Heart left ventricle (tissue), 16 donors: ENCODE measurements at regions of chr5 and their contacts with region 1.

Region 1: DNA sequence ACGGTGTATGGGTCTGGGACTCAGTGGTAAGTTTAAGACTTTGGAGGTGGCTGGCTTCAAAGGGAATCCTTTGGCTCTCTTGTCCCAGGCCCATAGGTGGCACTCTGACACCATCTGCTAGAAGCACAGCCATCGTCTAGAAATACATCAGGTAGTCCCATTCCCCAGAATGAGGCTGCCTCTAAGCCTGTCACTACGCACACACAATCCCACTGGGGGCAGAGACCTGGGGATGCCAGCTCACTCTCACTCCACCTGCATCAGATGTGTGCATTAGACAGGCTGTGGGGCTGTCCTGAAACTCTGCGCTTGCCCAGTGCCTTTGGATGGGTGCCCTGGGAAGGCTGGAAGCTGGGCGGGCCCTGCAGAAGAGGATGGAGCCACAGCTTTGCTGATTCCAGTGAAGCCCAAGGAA is 127.5 kb upstream of the PANK3 start:
- DNase-seq: peak in 2 of 5 donors; percentile 40 to 49
- ATAC-seq: peak; percentile 68 to 84 (median 76)
- H3K4me3 ChIP-seq: no peak overlapping the region
- H3K27ac ChIP-seq: no peak overlapping the region
- H3K4me1 ChIP-seq: no peaks in the 10 kb centered on the region
- H3K27me3 ChIP-seq: no peaks in the 10 kb centered on the region
- CTCF ChIP-seq: peak in 11 of 12 donors; percentile 41 to 69 (median 58)
- POLR2A ChIP-seq: no peak

Region 2: DNA sequence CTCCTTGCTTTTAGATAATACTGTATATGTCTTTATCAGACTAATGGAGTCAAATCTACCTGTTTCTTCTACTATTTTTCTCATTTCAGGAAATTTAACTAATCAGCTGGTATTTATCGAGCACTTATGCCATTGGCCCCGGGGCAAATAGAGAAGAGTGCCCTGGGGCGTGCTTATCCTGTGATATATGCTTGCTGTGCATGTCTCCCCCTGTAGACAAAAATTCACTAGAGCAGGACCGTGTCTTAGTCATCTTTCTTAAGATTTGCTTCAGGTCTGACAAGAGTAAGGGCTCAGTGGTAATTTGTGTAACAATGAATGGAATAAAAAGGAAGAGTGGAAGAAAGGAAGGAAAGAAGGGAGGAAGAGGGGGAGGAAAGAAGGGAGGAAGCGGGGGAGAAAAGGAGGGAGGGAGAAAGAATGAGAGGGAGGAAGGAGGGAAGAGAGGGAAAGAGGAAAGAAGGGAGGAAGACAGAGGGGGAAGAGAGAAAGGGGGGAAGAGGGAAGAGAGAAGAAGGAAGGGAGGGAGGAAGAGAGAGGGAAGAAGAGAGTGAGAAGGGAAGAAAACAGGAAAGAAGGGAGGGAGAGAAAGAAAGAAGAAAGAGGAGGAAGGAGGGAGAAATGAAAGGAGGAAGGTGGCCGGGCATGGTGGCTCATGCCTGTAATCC is 168.2 kb after region 1 on chr5:
- intact Hi-C with region 1: loop called in 3 of 10 experiments (anchors 5 to 10 kb)
- DNase-seq: no peak
- ATAC-seq: peak in 1 of 4 donors; percentile 24
- H3K4me3 ChIP-seq: no peak overlapping the region
- H3K27ac ChIP-seq: no peak overlapping the region
- H3K4me1 ChIP-seq: peaks cover 0 to 10% (median 1%) of the 10 kb centered on the region in 12 donors
- H3K27me3 ChIP-seq: no peaks in the 10 kb centered on the region
- CTCF ChIP-seq: peak in 6 of 12 donors; percentile 17 to 45 (median 34)
- POLR2A ChIP-seq: no peak

Region 3: DNA sequence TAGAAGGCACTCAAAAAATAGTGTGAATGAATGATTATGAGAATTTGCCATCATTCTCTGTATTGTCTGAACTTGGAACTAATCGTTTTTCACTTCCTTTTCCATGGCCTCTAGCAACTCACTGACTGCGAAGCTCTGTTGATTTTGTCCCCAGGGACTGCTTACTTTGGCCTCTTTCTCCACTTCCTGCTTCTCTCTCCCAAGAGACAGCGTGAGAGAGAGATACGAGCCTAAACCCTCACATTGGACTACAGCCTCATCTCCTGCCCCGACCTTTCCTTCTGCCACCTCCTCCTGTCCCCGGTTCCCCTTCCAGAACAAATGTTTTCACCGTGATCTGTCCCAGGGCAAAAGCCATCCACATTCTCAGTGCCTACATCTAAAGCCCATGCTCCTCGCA is 173.3 kb after region 1 on chr5:
- intact Hi-C with region 1: loop called in 2 of 10 experiments (anchors 5 to 10 kb)
- DNase-seq: peak in 2 of 5 donors; percentile 35 to 39
- ATAC-seq: peak in 3 of 4 donors; percentile 53 to 70 (median 59)
- H3K4me3 ChIP-seq: no peak overlapping the region
- H3K27ac ChIP-seq: peak overlapping the region in 4 of 12 donors; percentile 13 to 45 (median 32)
- H3K4me1 ChIP-seq: peaks cover 0 to 20% (median 3%) of the 10 kb centered on the region in 12 donors
- H3K27me3 ChIP-seq: no peaks in the 10 kb centered on the region
- CTCF ChIP-seq: no peak
- POLR2A ChIP-seq: no peak

Region 4: GRCh38 chr5:168947212-168947868 is 240.7 kb after region 1 on chr5:
- intact Hi-C with region 1: loop called in 5 of 10 experiments (anchors 5 to 10 kb)
- DNase-seq: peak in 3 of 5 donors; percentile 18 to 37 (median 35)
- ATAC-seq: peak in 3 of 4 donors; percentile 39 to 75 (median 67)
- H3K4me3 ChIP-seq: no peak overlapping the region
- H3K27ac ChIP-seq: no peak overlapping the region
- H3K4me1 ChIP-seq: peaks cover 0 to 8% (median 0%) of the 10 kb centered on the region in 12 donors
- H3K27me3 ChIP-seq: no peaks in the 10 kb centered on the region
- CTCF ChIP-seq: peak; percentile 52 to 75 (median 61)
- POLR2A ChIP-seq: no peak

Region 5: GRCh38 chr5:169197343-169197742 is 490.7 kb after region 1 on chr5:
- intact Hi-C with region 1: loop called in 1 of 10 experiments (anchors 5 kb)
- DNase-seq: peak in 3 of 5 donors; percentile 14 to 35 (median 27)
- ATAC-seq: peak; percentile 42 to 77 (median 74)
- H3K4me3 ChIP-seq: no peak overlapping the region
- H3K27ac ChIP-seq: no peak overlapping the region
- H3K4me1 ChIP-seq: no peaks in the 10 kb centered on the region
- H3K27me3 ChIP-seq: no peaks in the 10 kb centered on the region
- CTCF ChIP-seq: peak in 11 of 12 donors; percentile 25 to 55 (median 41)
- POLR2A ChIP-seq: no peak

Region 6: GRCh38 chr5:169548315-169548714 is 841.7 kb after region 1 on chr5:
- intact Hi-C with region 1: loop called in 2 of 10 experiments (anchors 5 to 10 kb)
- DNase-seq: no peak
- ATAC-seq: peak in 3 of 4 donors; percentile 74 to 87 (median 79)
- H3K4me3 ChIP-seq: no peak overlapping the region
- H3K27ac ChIP-seq: no peak overlapping the region
- H3K4me1 ChIP-seq: no peaks in the 10 kb centered on the region
- H3K27me3 ChIP-seq: peaks cover 0 to 29% (median 6%) of the 10 kb centered on the region in 9 donors
- CTCF ChIP-seq: peak in 11 of 12 donors; percentile 18 to 61 (median 50)
- POLR2A ChIP-seq: no peak